ENCODE measurements at regions of chr5 and their contacts with region 1.

Region 1: GRCh38 chr5:180802325-180803180 is at the start of gene MGAT1:
- DNase-seq: peak; percentile 73 to 84 (median 78)
- H3K4me3 ChIP-seq: peak within 1 kb of the TSS; percentile 69 to 94 (median 85)
- H3K27ac ChIP-seq: peak within 1 kb of the TSS; percentile 76 to 92
- H3K4me1 ChIP-seq: peaks cover 43 to 88% (median 77%) of the 10 kb centered on the region in 4 experiments
- H3K27me3 ChIP-seq: no peaks in the 10 kb centered on the region

Region 2: DNA sequence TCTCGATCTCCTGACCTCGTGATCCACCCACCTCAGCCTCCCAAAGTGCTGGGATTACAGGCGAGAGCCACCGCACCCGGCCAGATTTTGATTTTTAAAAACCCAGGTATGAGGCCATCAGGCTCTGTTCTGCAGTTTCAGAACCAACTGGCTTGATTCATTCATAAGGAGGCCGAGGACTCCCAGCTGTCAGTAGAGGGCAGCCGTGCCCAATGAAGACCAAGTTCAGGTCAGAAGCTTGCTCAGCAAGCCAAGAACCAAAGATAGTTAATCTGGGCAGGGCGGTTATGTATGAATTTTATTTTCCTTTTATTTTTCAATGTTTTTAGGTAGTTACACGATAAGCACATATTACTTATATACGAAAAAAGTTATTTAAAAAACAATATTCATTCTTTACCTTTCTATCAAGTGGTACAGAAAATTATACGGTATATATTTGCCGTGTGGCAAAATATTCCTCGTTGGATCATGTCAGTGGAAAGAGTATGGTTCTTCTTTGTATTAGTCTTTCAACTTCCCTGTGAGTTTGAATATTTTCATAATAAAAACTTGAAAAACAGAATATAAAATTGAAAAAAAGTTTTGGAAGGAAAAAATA is 18.0 kb before region 1 on chr5:
- CTCF ChIA-PET with region 1: interaction called, 29 read pairs
- POLR2A ChIA-PET with region 1: no interaction called
- DNase-seq: peak; percentile 77 to 89 (median 83)
- H3K4me3 ChIP-seq: no peak overlapping the region
- H3K27ac ChIP-seq: no peak overlapping the region
- H3K4me1 ChIP-seq: peaks cover 0 to 31% (median 28%) of the 10 kb centered on the region in 4 experiments
- H3K27me3 ChIP-seq: no peaks in the 10 kb centered on the region

Region 3: GRCh38 chr5:180790011-180790410 is 12.5 kb before region 1 on chr5:
- CTCF ChIA-PET with region 1: interaction called, 29 read pairs
- POLR2A ChIA-PET with region 1: interaction called, 3 read pairs
- DNase-seq: peak; percentile 80 to 87 (median 82)
- H3K4me3 ChIP-seq: no peak overlapping the region
- H3K27ac ChIP-seq: peak overlapping the region in 1 of 2 experiments; percentile 2
- H3K4me1 ChIP-seq: peaks cover 0 to 32% (median 29%) of the 10 kb centered on the region in 4 experiments
- H3K27me3 ChIP-seq: no peaks in the 10 kb centered on the region

Region 4: DNA sequence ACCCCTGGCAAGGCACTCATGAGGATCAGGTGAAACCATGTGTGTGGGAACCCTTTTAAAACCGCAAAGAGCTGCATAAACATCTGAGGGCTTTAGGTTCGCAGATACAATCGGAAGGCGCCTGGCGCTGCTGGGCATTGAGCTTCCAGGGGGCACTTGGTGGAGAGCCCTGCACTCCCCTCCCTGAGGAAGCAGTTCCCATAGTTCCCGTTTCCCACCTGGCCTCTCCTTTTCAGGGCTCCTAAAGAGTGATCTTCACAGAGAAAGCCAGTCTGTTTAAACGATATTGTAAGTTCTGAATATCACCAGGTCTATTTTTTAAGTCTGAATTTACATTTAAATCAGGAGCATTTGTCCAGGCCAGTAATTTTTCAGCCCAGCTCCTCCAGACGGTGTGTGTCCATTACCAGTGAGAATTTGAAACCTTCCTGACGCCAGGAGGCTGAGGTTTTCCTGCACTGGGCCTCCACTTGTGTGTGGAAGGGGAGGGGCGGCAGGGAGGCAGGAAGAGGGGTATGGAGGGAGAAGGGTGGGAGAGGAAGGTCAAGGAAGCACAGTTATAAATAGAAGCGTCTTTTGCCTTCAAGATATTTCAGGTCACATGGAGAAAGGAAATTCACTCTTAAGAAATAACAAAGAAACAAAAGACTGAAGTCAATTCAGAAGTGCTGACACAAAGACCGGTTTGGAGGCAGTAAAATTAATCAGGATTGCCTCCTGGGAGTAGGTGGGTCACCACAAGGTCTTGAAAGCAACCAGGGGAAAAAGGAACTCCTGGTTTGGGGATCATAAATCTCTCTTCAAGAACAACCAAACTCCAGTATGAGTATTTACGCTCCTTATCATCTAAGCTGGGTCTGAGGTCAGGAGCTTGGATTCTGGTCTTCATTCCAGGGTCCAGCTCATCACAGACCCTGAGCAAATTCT is 14.3 kb after region 1 on chr5:
- CTCF ChIA-PET with region 1: interaction called, 11 read pairs
- POLR2A ChIA-PET with region 1: interaction called, 3 read pairs
- DNase-seq: peak in 1 of 3 donors; percentile 46
- H3K4me3 ChIP-seq: peak overlapping the region in 5 of 7 experiments; percentile 19 to 64 (median 34)
- H3K27ac ChIP-seq: peak overlapping the region; percentile 28 to 65
- H3K4me1 ChIP-seq: peaks cover 8 to 57% (median 37%) of the 10 kb centered on the region in 4 experiments
- H3K27me3 ChIP-seq: no peaks in the 10 kb centered on the region

Region 5: GRCh38 chr5:180831139-180832048 is 28.8 kb after region 1 on chr5:
- CTCF ChIA-PET with region 1: interaction called, 6 read pairs
- POLR2A ChIA-PET with region 1: interaction called, 14 read pairs
- DNase-seq: peak; percentile 63 to 77 (median 75)
- H3K4me3 ChIP-seq: peak overlapping the region; percentile 75 to 97 (median 84)
- H3K27ac ChIP-seq: peak overlapping the region; percentile 93 to 95
- H3K4me1 ChIP-seq: peaks cover 4 to 26% (median 24%) of the 10 kb centered on the region in 4 experiments
- H3K27me3 ChIP-seq: no peaks in the 10 kb centered on the region